ENCODE measurements at regions of chr17 and their contacts with region 1.

Region 1: DNA sequence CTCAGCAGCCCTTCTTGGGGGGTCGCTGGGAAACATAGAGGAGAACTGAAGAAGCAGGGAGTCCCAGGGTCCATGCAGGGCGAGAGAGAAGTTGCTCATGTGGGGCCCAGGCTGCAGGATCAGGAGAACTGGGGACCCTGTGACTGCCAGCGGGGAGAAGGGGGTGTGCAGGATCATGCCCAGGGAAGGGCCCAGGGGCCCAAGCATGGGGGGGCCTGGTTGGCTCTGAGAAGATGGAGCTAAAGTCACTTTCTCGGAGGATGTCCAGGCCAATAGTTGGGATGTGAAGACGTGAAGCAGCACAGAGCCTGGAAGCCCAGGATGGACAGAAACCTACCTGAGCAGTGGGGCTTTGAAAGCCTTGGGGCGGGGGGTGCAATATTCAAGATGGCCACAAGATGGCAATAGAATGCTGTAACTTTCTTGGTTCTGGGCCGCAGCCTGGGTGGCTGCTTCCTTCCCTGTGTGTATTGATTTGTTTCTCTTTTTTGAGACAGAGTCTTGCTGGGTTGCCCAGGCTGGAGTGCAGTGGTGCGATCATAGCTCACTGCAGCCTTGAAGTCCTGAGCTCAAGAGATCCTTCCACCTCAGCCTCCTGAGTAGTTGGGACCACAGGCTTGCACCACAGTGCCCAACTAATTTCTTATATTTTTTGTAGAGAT is 3.4 kb downstream of the STH start:
- DNase-seq: peak; percentile 82
- ATAC-seq: peak; percentile 90

Region 2: GRCh38 chr17:46028981-46029565 is 26.6 kb after region 1 on chr17:
- intact Hi-C with region 1: loop called (anchors 1 kb)
- DNase-seq: no peak
- ATAC-seq: no peak